SK-N-SH (cell line): ENCODE measurements at regions of chr3 and their contacts with region 1.

Region 1: GRCh38 chr3:185292238-185292637 is 38.4 kb upstream of the EHHADH start:
- DNase-seq: no peak
- H3K4me3 ChIP-seq: no peak overlapping the region
- H3K27ac ChIP-seq: no peak overlapping the region
- H3K4me1 ChIP-seq: no peaks in the 10 kb centered on the region; a peak in 1 of 4 replicates
- H3K27me3 ChIP-seq: no peaks in the 10 kb centered on the region
- CTCF ChIP-seq: no peak
- EP300 ChIP-seq: no peak
- RAD21 ChIP-seq: no peak

Region 2: GRCh38 chr3:185280572-185281365 is 11.5 kb before region 1 on chr3:
- CTCF ChIA-PET with region 1: interaction called, 10 read pairs
- POLR2A ChIA-PET with region 1: no interaction called
- DNase-seq: peak; percentile 54
- H3K4me3 ChIP-seq: no peak overlapping the region; a peak in 1 of 4 replicates
- H3K27ac ChIP-seq: peak overlapping the region in 1 of 2 experiments; percentile 89; a peak in 2 of 4 replicates
- H3K4me1 ChIP-seq: peaks cover 0 to 17% of the 10 kb centered on the region in 2 experiments; a peak in 3 of 4 replicates
- H3K27me3 ChIP-seq: no peaks in the 10 kb centered on the region
- CTCF ChIP-seq: peak; percentile 79
- EP300 ChIP-seq: no peak
- RAD21 ChIP-seq: peak; percentile 57

Region 3: DNA sequence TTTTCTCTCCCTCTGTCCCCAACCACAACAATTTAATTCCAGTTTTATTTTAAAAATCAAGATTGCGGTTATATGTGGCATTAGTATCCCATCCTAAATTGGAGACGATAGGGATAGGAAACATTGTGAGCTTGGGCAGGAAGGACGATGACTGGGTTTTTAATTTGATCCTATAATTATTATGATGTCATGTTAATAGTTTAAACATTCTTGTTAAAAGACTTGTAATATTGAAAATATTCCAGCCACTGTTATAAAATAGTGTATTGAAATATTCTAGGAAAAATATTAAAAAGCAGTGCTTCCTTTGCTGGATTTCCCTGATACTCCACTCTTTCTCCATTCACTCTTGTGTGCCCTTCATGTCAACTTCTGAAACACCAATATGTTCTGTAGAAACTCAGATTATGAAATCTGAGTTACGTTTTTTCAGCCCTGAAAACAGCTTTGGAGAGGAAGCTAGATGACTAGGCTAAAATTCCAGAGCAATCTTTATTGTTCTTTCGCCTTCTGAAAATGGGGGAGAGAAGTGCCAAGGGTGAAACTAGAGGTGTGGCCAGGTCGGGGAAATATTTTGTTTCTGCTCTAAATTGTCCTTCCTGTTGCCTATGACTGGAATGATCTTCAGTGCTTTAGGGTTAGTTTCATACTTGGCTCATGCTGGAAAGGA is 24.6 kb after region 1 on chr3:
- CTCF ChIA-PET with region 1: no interaction called
- POLR2A ChIA-PET with region 1: no interaction called
- DNase-seq: no peak
- H3K4me3 ChIP-seq: no peak overlapping the region
- H3K27ac ChIP-seq: no peak overlapping the region
- H3K4me1 ChIP-seq: no peaks in the 10 kb centered on the region; a peak in 1 of 4 replicates
- H3K27me3 ChIP-seq: no peaks in the 10 kb centered on the region
- CTCF ChIP-seq: no peak
- EP300 ChIP-seq: no peak
- RAD21 ChIP-seq: no peak